ENCODE measurements at regions of chr9 and their contacts with region 1.

Region 1: GRCh38 chr9:104780799-104781395 is 17.0 kb downstream of the NIPSNAP3B start:
- DNase-seq: peak in 1 of 2 experiments; percentile 43
- H3K4me3 ChIP-seq: no peak overlapping the region
- H3K27ac ChIP-seq: no peak overlapping the region
- H3K4me1 ChIP-seq: no peaks in the 10 kb centered on the region
- H3K27me3 ChIP-seq: no peaks in the 10 kb centered on the region
- CTCF ChIP-seq: peak; percentile 66

Region 2: DNA sequence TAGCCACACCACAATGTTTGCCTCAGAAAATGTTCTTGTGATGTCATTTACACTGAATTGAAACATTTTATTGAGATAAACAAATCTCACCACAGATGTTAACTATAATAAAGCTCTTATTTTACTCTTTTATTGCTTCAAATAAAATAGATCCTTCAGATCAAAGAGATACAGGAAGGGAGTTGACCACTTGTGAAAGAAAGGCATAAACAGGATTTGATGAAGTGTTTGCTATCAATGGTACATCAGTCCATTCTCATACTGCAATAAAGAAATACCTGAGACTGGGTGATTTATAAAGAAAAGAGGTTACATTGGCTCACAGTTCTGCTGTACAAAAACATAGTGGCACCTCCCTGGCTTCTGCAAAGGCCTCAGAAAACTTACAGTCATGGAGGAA is 317.0 kb before region 1 on chr9:
- CTCF ChIA-PET with region 1: no interaction called
- POLR2A ChIA-PET with region 1: no interaction called
- intact Hi-C with region 1: no loop called
- DNase-seq: no peak
- H3K4me3 ChIP-seq: no peak overlapping the region
- H3K27ac ChIP-seq: no peak overlapping the region
- H3K4me1 ChIP-seq: no peaks in the 10 kb centered on the region
- H3K27me3 ChIP-seq: no peaks in the 10 kb centered on the region
- CTCF ChIP-seq: no peak

Region 3: GRCh38 chr9:104795082-104795481 is 14.2 kb after region 1 on chr9:
- CTCF ChIA-PET with region 1: no interaction called
- POLR2A ChIA-PET with region 1: interaction called, 10 read pairs
- intact Hi-C with region 1: no loop called
- DNase-seq: no peak
- H3K4me3 ChIP-seq: no peak overlapping the region
- H3K27ac ChIP-seq: no peak overlapping the region
- H3K4me1 ChIP-seq: no peaks in the 10 kb centered on the region
- H3K27me3 ChIP-seq: no peaks in the 10 kb centered on the region
- CTCF ChIP-seq: no peak

Region 4: GRCh38 chr9:105157130-105157583 is 376.3 kb after region 1 on chr9:
- CTCF ChIA-PET with region 1: interaction called, 3 read pairs
- POLR2A ChIA-PET with region 1: no interaction called
- intact Hi-C with region 1: loop called (anchors 1 kb)
- DNase-seq: peak; percentile 52 to 71
- H3K4me3 ChIP-seq: no peak overlapping the region
- H3K27ac ChIP-seq: no peak overlapping the region
- H3K4me1 ChIP-seq: peaks cover 24% of the 10 kb centered on the region
- H3K27me3 ChIP-seq: no peaks in the 10 kb centered on the region
- CTCF ChIP-seq: peak; percentile 71

Region 5: DNA sequence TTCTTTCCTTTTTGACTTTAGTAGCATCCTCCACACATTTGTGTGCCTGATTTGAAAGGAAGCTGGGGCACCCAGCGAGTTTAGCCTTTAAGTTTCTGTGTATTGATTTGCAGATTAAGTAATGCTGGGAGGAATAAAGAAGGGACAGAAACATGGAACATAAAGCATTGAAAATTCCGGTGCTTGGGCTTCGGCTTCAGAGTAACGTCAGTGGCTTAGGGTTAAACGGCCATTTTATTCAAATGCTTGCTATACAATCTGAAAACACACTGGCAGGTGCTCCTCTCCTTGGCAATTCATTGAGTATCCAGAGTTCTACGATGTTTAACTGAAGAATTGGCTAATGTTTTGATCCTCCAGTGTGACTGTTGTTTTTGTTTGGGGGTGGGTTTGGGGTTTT is 608.9 kb after region 1 on chr9:
- CTCF ChIA-PET with region 1: interaction called, 15 read pairs
- POLR2A ChIA-PET with region 1: no interaction called
- intact Hi-C with region 1: no loop called
- DNase-seq: no peak
- H3K4me3 ChIP-seq: no peak overlapping the region
- H3K27ac ChIP-seq: no peak overlapping the region
- H3K4me1 ChIP-seq: no peaks in the 10 kb centered on the region
- H3K27me3 ChIP-seq: no peaks in the 10 kb centered on the region
- CTCF ChIP-seq: no peak

Region 6: DNA sequence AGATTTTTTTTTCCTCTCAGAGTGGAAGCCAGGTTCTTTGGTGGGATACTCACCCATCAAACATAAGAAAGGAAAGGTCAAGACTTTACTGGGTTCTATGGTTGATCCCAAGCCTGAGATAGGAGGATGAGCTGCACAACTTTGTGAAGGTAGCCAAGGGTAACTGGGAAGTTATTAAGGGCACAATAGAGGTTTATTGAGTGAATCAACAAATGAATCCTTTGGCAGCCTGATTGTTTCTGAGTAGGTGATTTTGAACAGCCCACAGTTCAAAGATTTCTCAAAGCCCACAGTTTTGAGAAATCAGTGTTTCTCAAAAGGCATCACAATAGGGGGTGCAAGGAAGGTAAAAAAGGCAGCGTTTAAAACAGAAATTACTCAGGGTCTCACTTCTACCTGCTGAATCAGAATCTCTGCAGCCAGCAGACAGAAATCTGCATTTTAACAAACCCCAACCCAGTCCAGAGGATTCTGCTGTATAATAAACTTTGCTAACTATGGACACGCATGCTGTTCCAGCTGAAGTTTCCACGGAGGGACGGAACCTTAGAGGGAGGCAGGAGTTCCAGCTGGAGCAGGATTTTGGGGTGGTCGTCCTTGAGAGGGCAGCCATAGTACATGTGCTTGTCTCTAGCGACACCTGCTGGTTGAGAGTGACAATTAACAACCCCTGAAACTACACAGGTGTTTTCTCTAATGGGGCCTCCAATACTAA is 634.2 kb after region 1 on chr9:
- CTCF ChIA-PET with region 1: no interaction called
- POLR2A ChIA-PET with region 1: no interaction called
- intact Hi-C with region 1: loop called (anchors 1 kb)
- DNase-seq: peak in 1 of 2 experiments; percentile 45
- H3K4me3 ChIP-seq: no peak overlapping the region
- H3K27ac ChIP-seq: no peak overlapping the region
- H3K4me1 ChIP-seq: 0 out of 2 replicates have a peak, but pooled peaks cover 3% of the 10 kb centered on the region
- H3K27me3 ChIP-seq: no peaks in the 10 kb centered on the region
- CTCF ChIP-seq: peak; percentile 98

Region 7: GRCh38 chr9:105713260-105714019 is 932.5 kb after region 1 on chr9:
- CTCF ChIA-PET with region 1: no interaction called
- POLR2A ChIA-PET with region 1: no interaction called
- intact Hi-C with region 1: loop called (anchors 2 kb)
- DNase-seq: no peak
- H3K4me3 ChIP-seq: no peak overlapping the region
- H3K27ac ChIP-seq: no peak overlapping the region
- H3K4me1 ChIP-seq: no peaks in the 10 kb centered on the region
- H3K27me3 ChIP-seq: no peaks in the 10 kb centered on the region
- CTCF ChIP-seq: no peak